H1 (cell line): ENCODE measurements at regions of chr2 and their contacts with region 1.

Region 1: DNA sequence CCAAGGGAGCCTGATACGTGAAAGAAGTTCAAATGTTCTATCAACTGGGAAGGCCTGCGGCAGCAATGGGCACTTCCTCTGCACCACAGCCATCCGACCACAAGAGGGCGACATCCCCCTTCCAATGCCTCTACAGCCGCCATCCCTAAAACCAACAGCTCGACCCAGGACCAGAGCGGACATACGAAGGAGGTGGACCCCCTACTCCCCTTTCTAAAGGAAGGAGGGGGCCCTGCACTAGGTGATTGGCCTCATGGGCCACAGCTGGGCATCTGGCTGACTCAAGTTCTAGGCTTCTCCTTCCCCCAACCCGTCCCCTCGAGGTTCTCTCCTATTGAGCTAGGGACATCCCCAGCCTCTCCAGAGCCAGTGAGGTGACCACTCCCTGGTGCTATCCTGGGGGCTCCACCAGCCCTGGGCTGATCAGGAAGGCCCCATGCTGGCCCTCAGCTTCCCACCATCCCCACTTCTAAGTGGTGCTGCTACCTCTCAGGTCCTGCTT is 217.2 kb downstream of the TNS1 start:
- DNase-seq: peak; percentile 53 to 96
- H3K4me3 ChIP-seq: no peak overlapping the region
- H3K27ac ChIP-seq: no peak overlapping the region
- H3K4me1 ChIP-seq: peaks cover 0 to 2% (median 0%) of the 10 kb centered on the region in 4 experiments; a peak in 1 of 7 replicates
- H3K27me3 ChIP-seq: no peaks in the 10 kb centered on the region; a peak in 1 of 7 replicates
- CTCF ChIP-seq: peak; percentile 93 to 98 (median 96)
- EP300 ChIP-seq: no peak
- POLR2A ChIP-seq: no peak
- RAD21 ChIP-seq: peak; percentile 98 to 100

Region 2: DNA sequence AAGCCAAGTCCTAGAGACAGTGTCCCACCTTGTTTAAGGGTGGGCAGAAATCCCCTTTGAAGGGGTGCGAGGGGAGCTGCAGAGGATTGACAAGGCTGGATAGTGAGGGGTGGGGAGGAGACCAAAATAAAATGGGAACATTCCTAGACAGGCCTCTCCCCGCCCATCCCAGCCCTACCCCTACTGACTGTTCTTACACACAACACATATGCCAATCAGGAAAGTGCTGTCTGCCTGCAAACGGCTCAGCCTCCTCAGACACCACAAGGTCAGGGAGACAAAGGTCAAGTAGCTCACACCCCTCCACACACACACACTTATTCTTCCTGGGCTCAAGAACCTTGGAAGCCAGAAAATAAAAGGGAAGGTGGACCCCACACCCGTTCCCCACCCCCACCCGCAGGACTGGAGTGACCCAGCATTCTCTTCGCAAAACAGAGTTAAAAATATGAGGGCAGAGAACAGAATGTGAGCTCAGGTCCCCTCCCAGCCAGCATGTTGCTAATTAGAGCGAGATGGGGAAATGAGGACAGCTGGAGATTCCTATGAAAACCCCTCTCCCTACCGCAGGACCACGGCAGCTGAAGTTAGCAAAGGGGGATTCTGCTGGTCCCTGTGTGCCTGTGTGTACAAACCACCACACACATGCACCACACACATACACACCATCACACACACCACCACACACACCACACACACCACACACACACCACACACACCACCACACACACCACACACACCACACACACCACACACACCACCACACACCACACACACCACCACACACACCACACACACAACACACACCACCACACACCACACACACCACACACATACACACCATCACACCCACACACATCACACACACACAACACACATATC is 19.4 kb after region 1 on chr2:
- CTCF ChIA-PET with region 1: interaction called, 121 read pairs
- POLR2A ChIA-PET with region 1: interaction called, 3 read pairs
- DNase-seq: no peak
- H3K4me3 ChIP-seq: no peak overlapping the region
- H3K27ac ChIP-seq: no peak overlapping the region
- H3K4me1 ChIP-seq: peaks cover 0 to 5% (median 0%) of the 10 kb centered on the region in 4 experiments; a peak in 1 of 7 replicates
- H3K27me3 ChIP-seq: no peaks in the 10 kb centered on the region
- CTCF ChIP-seq: no peak
- EP300 ChIP-seq: no peak
- POLR2A ChIP-seq: no peak
- RAD21 ChIP-seq: no peak

Region 3: DNA sequence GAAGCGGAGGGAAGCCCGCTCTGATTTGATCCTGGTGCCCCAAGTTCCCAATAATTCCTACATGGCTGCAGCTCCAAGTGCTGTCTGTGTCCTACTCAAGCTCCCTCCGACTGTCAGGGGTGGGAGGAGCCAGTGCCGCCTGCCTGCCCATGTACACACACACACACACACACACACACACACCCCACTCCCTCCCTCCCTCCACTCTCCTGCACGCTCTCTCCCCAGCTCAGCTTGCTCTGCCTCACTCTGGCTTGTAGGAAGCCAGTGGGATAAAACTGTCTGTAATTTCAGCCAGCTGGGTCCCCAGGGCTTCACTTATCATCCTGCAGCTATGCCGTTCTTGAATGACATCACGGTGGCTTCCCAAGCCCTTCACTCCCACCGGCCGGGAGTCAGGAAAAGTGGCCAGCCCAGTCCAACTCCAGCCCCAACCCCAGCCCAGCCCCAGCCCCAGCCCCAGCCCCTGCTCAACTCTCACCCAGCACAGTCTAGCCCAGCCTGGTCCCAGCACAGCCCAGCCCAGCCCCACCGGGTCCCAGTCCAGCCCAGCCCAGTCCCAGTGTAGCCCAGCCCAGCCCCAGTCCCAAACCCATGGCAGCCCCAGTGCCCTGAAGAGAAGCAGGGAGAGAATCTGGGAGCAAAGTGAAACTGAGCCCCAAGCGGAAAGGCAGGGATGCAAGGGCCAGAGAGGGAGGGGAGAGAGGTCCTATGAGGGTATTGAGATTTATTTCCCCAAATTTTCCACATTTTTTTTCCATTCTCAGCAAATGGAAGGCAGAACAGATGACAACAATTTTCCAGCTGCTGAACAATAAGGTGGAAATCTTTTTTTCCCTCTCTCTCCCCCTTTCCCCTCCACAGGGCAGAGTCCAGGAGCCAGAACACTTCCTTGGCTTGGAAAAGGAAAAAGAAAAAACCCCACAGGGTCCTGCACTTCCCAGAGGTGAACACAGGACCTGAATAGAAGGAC is 73.2 kb after region 1 on chr2:
- CTCF ChIA-PET with region 1: interaction called, 46 read pairs
- POLR2A ChIA-PET with region 1: no interaction called
- DNase-seq: no peak
- H3K4me3 ChIP-seq: no peak overlapping the region
- H3K27ac ChIP-seq: no peak overlapping the region
- H3K4me1 ChIP-seq: peaks cover 0 to 18% (median 2%) of the 10 kb centered on the region in 4 experiments; a peak in 5 of 7 replicates
- H3K27me3 ChIP-seq: no peaks in the 10 kb centered on the region
- CTCF ChIP-seq: no peak
- EP300 ChIP-seq: no peak
- POLR2A ChIP-seq: no peak
- RAD21 ChIP-seq: no peak

Region 4: GRCh38 chr2:217909156-217909820 is 123.7 kb after region 1 on chr2:
- CTCF ChIA-PET with region 1: interaction called, 207 read pairs
- POLR2A ChIA-PET with region 1: no interaction called
- DNase-seq: no peak
- H3K4me3 ChIP-seq: no peak overlapping the region
- H3K27ac ChIP-seq: no peak overlapping the region
- H3K4me1 ChIP-seq: peaks cover 3 to 15% (median 9%) of the 10 kb centered on the region in 4 experiments
- H3K27me3 ChIP-seq: peaks cover 0 to 4% (median 2%) of the 10 kb centered on the region in 4 experiments; a peak in 4 of 7 replicates
- CTCF ChIP-seq: peak in 2 of 3 experiments; percentile 10 to 28; a peak in 3 of 4 replicates
- EP300 ChIP-seq: no peak
- POLR2A ChIP-seq: no peak
- RAD21 ChIP-seq: peak in 1 of 2 experiments; percentile 14; a peak in 1 of 4 replicates

Region 5: GRCh38 chr2:217972490-217972889 is 186.9 kb after region 1 on chr2:
- CTCF ChIA-PET with region 1: interaction called, 10 read pairs
- POLR2A ChIA-PET with region 1: no interaction called
- DNase-seq: no peak
- H3K4me3 ChIP-seq: no peak overlapping the region
- H3K27ac ChIP-seq: no peak overlapping the region
- H3K4me1 ChIP-seq: no peaks in the 10 kb centered on the region
- H3K27me3 ChIP-seq: peaks cover 0 to 13% (median 8%) of the 10 kb centered on the region in 4 experiments; a peak in 4 of 7 replicates
- CTCF ChIP-seq: no peak
- EP300 ChIP-seq: no peak
- POLR2A ChIP-seq: no peak
- RAD21 ChIP-seq: no peak

Region 6: DNA sequence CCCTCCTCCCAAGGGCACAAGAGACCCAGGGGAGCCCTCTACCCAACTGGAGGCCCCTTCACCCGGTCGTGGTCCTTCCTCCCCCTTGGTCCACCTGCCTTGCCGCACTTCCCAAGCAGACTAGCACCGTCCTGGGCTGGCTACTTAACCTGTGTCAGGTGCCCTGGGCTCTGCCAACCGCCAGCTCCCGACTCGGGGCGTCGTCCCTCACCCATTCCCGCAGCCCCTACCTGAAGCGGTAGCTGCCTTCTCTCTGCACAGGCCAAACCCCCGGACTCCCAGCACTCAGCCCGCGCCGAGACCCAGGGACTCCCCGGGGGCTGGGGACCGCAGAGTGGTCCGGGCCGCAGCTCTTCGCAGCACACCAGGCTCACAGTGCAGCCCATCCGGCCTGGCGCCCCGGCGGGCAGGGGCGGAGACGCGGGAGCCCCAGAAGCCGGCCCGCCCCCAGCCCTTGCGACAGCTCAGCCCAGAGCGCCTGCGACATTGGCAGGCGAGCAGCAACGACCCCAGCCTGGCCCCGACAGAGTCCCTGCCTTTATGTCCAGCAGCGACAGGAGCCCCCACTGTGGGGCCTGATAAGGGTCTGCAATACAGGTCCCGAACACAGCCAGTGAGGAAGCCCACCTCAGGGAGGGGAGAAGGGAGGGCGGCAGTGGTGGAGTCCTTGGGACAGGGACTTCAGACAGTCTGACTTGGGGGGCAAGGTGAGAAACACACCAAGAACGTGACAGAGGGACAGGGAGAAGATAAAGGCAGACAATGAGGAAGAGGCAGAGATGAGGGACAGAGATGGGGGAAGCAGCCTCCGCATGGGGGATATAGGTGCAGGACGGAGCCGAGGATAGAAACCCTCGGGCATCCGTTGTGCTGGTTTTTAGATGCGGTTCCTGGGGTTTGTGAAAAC is 248.2 kb after region 1 on chr2:
- CTCF ChIA-PET with region 1: interaction called, 57 read pairs
- POLR2A ChIA-PET with region 1: interaction called, 3 read pairs
- DNase-seq: peak in 1 of 2 experiments; percentile 75
- H3K4me3 ChIP-seq: peak overlapping the region; percentile 25 to 63 (median 44); a peak in 7 of 8 replicates
- H3K27ac ChIP-seq: no peak overlapping the region
- H3K4me1 ChIP-seq: peaks cover 0 to 13% (median 5%) of the 10 kb centered on the region in 4 experiments; a peak in 5 of 7 replicates
- H3K27me3 ChIP-seq: peaks cover 6 to 25% (median 20%) of the 10 kb centered on the region in 4 experiments
- CTCF ChIP-seq: no peak
- EP300 ChIP-seq: no peak
- POLR2A ChIP-seq: no peak
- RAD21 ChIP-seq: no peak